ENCODE measurements at regions of chr22 and their contacts with region 1.

Region 1: DNA sequence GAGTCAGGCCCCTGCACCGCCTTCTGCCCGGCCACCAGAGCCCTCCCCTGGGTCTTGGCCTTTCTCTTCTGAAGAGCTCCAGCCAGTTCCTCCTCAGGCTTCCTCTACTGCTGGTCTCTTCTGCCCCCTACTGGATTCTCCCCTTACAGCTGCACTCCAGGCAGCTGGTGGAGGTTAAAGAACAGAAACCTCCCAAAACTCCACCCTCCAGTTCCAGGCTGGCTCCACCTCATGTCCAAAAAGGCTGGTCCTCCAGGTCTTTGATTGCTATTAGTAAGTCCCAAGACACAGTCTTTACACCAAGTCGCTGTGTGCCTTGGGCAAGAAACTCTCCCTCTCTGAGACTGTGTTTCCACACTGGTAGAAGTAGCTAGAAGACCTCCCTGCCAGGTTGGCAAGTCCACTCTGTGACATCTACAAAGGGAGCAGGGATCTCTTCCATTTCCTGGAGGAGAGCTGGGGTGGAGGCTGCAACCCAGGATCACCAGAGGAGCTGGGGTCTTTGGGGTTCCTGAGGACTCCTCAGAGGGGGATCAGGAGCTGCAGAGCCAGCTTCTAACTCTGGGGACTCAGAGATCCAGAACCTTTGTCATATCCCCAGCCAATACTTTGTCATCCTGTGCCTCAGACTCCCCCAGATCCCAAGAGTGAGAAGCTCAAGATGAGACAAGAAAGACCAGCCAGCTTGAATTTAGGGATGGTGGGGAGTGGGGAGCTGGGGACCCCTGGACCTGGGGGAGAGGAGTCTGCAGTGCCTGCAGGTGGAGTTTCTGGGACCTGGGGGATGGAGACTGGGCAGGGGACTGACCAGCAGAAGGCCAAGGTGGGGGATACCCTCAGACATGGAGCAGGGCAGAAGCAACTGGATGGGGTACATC is 3.4 kb upstream of the IGLL5 start:
- DNase-seq: peak; percentile 79
- H3K4me3 ChIP-seq: no peak overlapping the region; a peak in 1 of 4 replicates
- H3K27ac ChIP-seq: no peak overlapping the region
- H3K4me1 ChIP-seq: peaks cover 0 to 33% of the 10 kb centered on the region in 2 experiments; a peak in 2 of 4 replicates
- H3K27me3 ChIP-seq: peaks cover 10% of the 10 kb centered on the region
- CTCF ChIP-seq: peak; percentile 59
- EP300 ChIP-seq: no peak
- RAD21 ChIP-seq: peak; percentile 91

Region 2: DNA sequence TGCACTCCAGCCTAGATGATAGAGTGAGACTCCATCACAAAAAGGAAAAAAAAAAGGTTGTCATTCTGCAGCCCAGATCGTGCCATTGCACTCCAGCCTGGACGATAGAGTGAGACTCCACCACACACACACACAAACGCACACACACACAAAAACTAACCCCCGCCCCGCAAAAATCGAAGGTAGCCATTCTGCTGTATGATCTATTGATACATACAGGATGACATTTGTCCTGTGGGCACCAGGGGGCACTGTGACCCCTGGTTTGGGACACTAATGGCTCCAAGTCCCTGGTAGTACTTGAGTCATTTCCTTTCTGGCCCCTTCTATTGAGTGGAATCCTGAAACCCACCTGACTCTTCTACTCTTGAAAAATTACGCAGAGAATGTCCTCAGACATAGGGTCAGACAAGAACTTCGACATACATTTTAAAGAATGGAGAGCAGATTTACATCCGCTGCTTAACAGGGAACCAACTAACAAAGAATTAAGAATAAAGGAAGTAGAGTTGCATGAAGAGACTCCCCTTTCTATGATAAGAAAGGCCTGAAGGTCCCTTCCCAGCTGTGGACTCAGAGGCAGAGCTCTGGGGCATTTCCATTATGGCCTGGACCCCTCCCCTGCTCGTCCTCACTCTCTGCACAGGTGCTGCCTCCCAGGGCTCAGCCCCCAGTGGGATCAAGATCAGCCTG is 290.1 kb before region 1 on chr22:
- CTCF ChIA-PET with region 1: interaction called, 84 read pairs
- POLR2A ChIA-PET with region 1: no interaction called
- DNase-seq: peak; percentile 73
- H3K4me3 ChIP-seq: no peak overlapping the region
- H3K27ac ChIP-seq: no peak overlapping the region
- H3K4me1 ChIP-seq: no peaks in the 10 kb centered on the region; a peak in 1 of 4 replicates
- H3K27me3 ChIP-seq: no peaks in the 10 kb centered on the region; the same call in 1 of the 2 replicates
- CTCF ChIP-seq: peak; percentile 78
- EP300 ChIP-seq: no peak
- RAD21 ChIP-seq: peak; percentile 80

Region 3: GRCh38 chr22:22753526-22754267 is 130.6 kb before region 1 on chr22:
- CTCF ChIA-PET with region 1: interaction called, 99 read pairs
- POLR2A ChIA-PET with region 1: interaction called, 6 read pairs
- DNase-seq: peak; percentile 79
- H3K4me3 ChIP-seq: peak overlapping the region in 1 of 2 experiments; percentile 35; a peak in 1 of 4 replicates
- H3K27ac ChIP-seq: no peak overlapping the region
- H3K4me1 ChIP-seq: no peaks in the 10 kb centered on the region
- H3K27me3 ChIP-seq: 0 out of 2 replicates have a peak, but pooled peaks cover 4% of the 10 kb centered on the region
- CTCF ChIP-seq: peak; percentile 60
- EP300 ChIP-seq: no peak
- RAD21 ChIP-seq: peak; percentile 63

Region 4: DNA sequence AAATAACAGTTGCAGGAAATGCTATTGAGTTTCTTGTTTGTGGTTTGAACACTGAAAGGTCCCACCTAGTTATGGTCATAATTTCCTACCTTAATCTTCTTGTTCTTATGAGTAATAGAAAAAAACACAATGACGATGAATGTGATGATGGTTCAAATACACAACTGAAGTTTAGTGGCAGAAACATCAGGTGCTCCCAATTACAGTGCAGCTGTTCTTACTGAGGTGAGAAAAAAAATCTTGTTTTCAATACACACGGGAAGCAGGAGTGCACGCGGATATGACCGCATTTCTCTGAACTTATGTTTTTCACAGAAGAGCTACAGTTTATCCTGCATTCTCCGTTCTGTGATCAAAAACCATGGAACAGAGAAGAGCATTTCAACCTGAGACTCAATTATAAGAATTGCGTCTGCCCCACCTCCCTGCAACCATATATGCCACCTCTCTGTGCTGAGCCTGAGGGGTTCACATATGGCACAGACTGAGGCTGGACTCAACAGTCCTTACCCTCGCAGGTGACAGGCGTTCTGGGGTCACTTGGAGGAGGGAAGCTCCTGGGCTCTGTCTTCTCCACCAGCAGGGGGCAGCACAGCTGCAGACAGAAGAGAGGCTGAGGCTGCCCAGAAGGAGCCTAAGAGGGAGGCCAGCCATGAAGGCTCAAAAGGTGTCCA is 96.3 kb before region 1 on chr22:
- CTCF ChIA-PET with region 1: interaction called, 109 read pairs
- POLR2A ChIA-PET with region 1: interaction called, 3 read pairs
- DNase-seq: peak; percentile 66
- H3K4me3 ChIP-seq: peak overlapping the region in 1 of 2 experiments; percentile 31; a peak in 1 of 4 replicates
- H3K27ac ChIP-seq: no peak overlapping the region
- H3K4me1 ChIP-seq: no peaks in the 10 kb centered on the region
- H3K27me3 ChIP-seq: no peaks in the 10 kb centered on the region
- CTCF ChIP-seq: peak; percentile 79
- EP300 ChIP-seq: no peak
- RAD21 ChIP-seq: peak; percentile 55

Region 5: DNA sequence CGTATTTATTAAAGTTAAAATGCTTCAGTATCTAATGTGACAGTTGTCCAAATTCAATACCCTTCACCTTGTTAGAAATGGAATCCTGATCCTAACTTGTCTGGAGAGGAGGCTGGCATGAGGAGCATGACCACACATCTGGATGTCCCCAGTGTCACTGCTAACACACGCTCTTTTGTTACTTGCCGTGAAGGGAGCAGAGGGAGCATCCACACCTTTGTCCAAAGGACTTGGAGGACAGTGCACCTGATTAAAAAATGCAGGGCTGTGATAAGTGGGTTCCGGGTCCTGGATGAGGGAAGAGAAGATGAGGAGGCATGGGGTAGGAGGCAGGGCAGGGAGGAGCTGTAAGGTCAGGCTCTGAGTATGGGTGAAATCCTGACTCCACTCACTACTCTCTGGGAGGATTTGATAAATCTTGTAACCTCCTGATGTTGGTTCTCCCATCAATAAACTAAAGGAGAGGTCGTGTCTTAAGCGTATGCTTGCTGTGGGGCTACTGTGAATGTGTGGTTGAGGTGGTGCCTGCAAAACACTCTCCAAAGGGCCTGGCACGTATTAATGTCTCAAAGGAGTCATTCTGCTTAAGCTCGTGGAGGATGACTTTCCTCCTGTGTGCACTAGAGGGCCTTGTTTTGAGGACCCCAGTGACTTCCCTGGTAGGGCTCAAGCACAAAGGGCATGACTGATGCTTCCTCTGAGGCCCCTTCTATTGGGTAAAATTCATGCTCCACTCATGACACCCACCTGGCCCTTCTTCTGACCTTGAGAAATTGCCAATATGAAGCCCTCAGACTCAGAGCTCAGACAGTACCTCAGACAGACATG is 13.5 kb before region 1 on chr22:
- CTCF ChIA-PET with region 1: interaction called, 12 read pairs
- POLR2A ChIA-PET with region 1: no interaction called
- DNase-seq: no peak
- H3K4me3 ChIP-seq: no peak overlapping the region
- H3K27ac ChIP-seq: no peak overlapping the region
- H3K4me1 ChIP-seq: no peaks in the 10 kb centered on the region
- H3K27me3 ChIP-seq: no peaks in the 10 kb centered on the region
- CTCF ChIP-seq: no peak
- EP300 ChIP-seq: no peak
- RAD21 ChIP-seq: no peak

Region 6: GRCh38 chr22:23281406-23282088 is 397.3 kb after region 1 on chr22:
- CTCF ChIA-PET with region 1: no interaction called
- POLR2A ChIA-PET with region 1: no interaction called
- DNase-seq: peak; percentile 93
- H3K4me3 ChIP-seq: peak overlapping the region in 1 of 2 experiments; percentile 47; a peak in 1 of 4 replicates
- H3K27ac ChIP-seq: peak overlapping the region; percentile 43 to 59; a peak in 3 of 4 replicates
- H3K4me1 ChIP-seq: peaks cover 6 to 14% of the 10 kb centered on the region in 2 experiments; a peak in 3 of 4 replicates
- H3K27me3 ChIP-seq: no peaks in the 10 kb centered on the region
- CTCF ChIP-seq: peak; percentile 86
- EP300 ChIP-seq: no peak
- RAD21 ChIP-seq: peak; percentile 99